ENCODE measurements at regions of chr16 and their contacts with region 1.

Region 1: GRCh38 chr16:25838724-25839186 is 147.0 kb downstream of the HS3ST4 start:
- DNase-seq: peak in 24 of 42 donors; percentile 1 to 77 (median 34)

Region 2: GRCh38 chr16:26005336-26005735 is 166.6 kb after region 1 on chr16:
- intact Hi-C with region 1: no loop called
- DNase-seq: no peak

Region 3: DNA sequence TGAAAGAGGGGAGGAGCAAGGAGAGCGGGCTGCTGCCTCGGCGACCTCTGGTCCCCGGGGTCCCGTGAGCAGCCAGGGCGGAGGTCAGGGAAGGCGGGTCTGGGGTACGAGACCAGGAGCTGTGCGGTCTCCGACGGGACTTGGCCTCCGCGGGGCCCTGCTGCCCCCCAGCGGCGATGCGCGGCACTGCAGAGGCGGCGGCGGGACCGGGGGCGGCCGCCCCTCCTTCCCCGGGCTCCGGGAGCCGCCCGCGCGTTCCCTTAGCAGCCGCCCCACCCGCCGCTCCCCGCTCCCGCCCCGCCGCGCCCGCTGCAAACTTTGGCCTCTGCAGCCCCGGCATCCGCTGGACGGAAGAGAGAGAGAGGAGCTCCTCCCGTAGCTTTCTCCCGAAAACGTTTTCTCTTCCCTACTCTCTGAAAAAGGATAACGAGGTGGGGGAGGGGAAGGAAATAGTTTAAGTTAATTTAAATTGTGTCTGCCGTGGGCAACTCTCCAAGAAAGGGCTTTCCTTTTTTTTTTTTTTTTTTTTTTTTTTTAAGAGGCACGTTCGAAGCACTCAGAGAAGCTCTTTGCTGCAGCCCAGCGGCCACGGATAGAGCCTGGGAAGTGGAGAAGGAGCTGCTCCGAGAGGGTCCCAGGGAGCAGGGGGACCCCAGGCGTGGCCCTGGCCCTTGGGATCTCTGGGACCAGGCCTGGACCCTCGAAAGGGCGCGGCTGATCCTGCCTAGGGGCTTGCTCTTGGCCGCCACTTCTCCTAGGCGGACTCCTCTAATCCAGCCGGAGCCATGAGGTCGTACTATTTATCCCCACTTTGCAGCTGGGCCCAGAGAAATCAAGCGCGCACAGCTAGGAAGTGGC is 1271.1 kb after region 1 on chr16:
- intact Hi-C with region 1: loop called (anchors 10 kb)
- DNase-seq: peak; percentile 7 to 87 (median 72)

Measured in head of caudate nucleus (tissue), 42 donors.